ENCODE measurements at regions of chr2 and their contacts with region 1.

Region 1: DNA sequence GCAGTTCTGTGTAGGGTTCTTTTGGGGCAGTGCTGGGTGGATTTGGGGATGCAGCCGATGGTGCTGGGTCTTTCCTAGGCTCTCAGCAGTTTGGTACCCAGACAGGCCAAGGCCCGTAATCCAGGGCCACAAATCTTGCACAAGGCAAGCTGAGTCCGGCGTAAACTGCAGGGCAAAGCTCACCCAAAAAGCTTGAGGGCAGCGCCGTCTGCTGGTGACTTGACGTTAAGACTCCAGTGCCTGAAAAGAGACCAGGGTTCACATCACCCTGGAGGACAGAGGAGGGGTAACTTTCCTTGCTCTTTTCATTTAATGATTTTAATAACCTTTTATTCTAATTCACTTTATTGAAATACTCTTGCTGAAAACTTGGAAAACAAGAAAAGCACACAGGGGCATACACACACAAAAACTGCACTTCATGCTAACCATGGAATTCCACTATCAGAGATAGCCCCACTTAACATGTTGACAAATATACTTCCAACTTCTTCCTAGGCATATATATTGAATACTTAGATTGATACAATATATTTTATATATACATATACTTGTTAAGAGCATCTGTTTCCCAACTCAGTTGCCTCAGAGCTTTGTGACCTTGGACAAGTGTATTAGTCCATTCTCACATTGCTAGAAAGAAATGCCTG is 38.9 kb downstream of the CNGA3 start:
- DNase-seq: peak; percentile 87
- CTCF ChIP-seq: peak; percentile 96

Region 2: DNA sequence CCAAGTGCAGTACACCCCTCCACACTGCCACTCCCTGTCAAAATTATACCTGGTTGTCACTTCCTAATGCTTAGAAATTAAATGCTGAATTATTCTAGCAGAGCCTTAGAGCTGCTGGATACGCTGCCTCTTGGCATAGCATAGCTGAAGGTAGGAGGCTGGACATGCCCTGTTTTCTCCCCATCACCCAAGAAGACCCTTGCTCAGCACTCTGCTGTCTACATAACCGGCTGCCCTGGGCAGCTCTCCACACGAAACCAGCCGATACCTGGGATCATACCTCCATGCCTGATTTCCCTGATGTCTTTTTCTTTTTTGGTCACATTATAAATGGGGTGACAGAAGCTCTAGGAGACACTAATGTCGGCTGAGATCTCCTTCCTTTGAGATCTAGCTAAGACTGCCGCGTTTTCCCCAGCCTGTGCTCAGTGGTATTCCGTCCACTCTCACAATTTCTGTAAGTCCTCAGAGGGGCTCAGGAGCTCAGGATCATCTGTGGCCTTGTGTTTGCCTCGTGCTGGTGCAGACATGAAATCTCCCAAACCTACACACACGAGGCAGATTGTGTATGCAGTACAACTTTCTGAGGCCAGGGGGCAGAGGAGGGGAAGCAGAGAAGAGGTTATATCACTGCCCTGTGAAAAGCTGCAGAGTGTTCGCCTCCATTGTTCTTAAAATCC is 685.3 kb before region 1 on chr2:
- in situ Hi-C with region 1: loop called (anchors 10 kb)
- DNase-seq: no peak
- CTCF ChIP-seq: peak; percentile 75

Region 3: GRCh38 chr2:97806738-97807618 is 578.2 kb before region 1 on chr2:
- in situ Hi-C with region 1: loop called (anchors 25 kb)
- DNase-seq: peak; percentile 68
- CTCF ChIP-seq: peak; percentile 98

Region 4: GRCh38 chr2:98039085-98039756 is 346.0 kb before region 1 on chr2:
- in situ Hi-C with region 1: no loop called
- DNase-seq: no peak
- CTCF ChIP-seq: no peak